Dorsolateral prefrontal cortex (tissue), 120 donors: ENCODE measurements at regions of chr5 and their contacts with region 1.

Region 1: DNA sequence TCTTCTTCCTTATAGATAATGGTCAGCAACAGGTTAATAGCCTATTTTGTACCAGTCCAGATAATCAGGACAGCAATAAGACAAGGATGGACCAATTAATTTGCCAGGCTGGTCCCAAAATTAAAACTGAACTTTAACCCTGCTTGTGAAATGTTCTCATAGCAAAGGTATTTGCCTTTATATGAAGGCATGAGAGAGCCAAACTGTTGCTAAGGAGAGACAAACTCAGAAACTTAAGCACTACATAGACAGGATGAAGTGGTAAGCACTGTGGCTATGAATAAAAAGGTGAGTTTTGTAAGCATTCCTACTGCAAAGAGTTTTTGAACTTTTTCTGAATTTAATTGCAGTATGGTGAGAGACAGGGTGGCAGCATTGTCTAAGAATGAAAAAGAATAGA is 174.7 kb upstream of the PPP1R2B start:
- DNase-seq: no peak
- H3K4me3 ChIP-seq: no peak overlapping the region
- H3K27ac ChIP-seq: no peak overlapping the region
- H3K27me3 ChIP-seq: no peaks in the 10 kb centered on the region
- CTCF ChIP-seq: no peak

Region 2: GRCh38 chr5:156219483-156220005 is 455.9 kb before region 1 on chr5:
- intact Hi-C with region 1: loop called in 1 of 2 experiments (anchors 5 kb)
- DNase-seq: no peak
- H3K4me3 ChIP-seq: no peak overlapping the region
- H3K27ac ChIP-seq: no peak overlapping the region
- H3K27me3 ChIP-seq: no peaks in the 10 kb centered on the region
- CTCF ChIP-seq: no peak